Posterior cingulate gyrus (tissue), 11 donors: ENCODE measurements at regions of chr9 and their contacts with region 1.

Region 1: DNA sequence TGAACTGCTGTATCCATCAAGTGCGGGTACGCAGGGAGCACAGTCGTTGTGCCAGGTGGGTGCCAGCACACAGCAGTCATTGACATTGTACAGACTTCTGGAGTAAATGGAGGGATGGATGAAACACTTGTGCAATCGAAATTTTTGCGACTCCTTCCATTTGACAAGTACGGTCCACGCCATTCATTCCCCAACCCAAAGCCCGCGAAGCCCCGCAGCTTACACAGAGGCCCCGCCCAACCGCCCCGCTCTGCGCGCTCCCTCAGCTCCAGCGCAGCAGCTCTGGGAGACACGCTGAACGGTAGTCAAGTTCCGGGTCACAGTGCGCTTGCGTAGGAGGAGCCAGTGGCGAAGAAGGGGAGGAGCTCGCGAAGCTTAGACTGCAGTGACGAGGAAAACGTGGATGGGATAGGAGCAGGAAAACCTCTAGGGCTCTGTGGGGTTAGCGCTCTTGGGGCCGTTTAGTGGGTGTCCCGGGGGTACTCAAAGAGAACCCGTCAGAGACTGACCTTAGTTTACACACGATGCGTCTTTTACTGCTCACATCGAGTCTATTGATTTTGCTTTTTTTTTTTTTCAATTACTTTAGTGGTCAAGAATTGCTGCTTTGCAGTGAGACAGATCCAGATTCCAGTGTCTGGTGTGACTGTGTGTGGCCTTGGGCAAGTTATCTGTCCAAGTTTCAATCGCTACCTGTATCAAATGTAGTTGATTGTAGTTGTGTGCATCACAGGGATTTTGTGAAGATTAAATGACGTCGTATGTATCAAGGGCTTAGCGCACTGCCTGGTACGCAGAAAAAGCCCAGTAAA is 15.3 kb upstream of the MSANTD3 start:
- DNase-seq: peak; percentile 86 to 99 (median 91)

Region 2: GRCh38 chr9:100352727-100353505 is 58.8 kb before region 1 on chr9 and contains the start of gene TEX10:
- intact Hi-C with region 1: loop called (anchors 5 kb)
- DNase-seq: peak; percentile 75 to 98 (median 88)